WTC11 (cell line): ENCODE measurements at regions of chr19 and their contacts with region 1.

Region 1: DNA sequence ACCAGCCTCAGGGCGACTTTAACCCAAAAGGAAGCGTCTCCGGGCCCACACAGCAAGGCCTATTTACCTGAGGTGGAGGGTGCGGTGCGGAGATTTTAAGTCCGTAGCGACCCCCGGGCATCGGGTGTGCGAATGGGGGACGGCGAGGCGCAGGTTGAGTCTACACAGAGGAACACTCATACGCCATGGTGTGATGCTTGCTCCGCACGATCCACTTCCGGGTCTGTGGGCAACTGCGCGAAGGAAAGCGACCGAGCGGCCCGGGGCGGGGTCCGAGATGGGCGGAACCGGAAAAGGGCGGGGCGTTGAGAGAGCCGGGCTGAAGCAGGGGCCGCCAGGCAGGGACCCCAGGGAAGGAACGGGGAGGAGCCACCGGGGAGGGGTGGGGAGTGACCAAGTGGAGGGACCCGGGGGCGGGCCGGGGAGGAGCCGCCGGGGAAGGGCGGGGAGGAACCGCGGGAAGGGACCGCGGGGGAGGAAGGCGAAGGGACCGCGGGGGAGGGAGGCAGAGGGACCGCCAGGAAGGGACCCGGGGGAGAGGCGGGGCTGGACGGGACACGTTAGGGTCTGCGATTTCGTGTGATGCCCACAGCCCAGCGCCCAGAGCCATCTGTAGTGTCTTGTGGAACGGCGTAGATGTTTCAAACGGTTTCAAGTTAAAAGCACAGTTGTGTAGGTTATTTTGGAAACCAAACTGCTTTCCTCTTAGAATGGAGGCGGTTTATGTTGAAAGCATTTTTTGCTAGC is at the start of gene ZNF160:
- DNase-seq: peak; percentile 99
- ATAC-seq: peak; percentile 96
- H3K4me3 Mint-ChIP-seq: peak within 1 kb of the TSS; percentile 82
- H3K27ac Mint-ChIP-seq: peak within 1 kb of the TSS; percentile 76
- H3K4me1 Mint-ChIP-seq: peaks cover 13% of the 10 kb centered on the region
- H3K27me3 Mint-ChIP-seq: peaks cover 8% of the 10 kb centered on the region; the same call in 1 of the 2 replicates
- CTCF ChIP-seq: no peak
- total RNA-seq, gene ZNF160: 53.8 to 54.6 TPM (median 54.5 TPM) in 3 replicates

Region 2: DNA sequence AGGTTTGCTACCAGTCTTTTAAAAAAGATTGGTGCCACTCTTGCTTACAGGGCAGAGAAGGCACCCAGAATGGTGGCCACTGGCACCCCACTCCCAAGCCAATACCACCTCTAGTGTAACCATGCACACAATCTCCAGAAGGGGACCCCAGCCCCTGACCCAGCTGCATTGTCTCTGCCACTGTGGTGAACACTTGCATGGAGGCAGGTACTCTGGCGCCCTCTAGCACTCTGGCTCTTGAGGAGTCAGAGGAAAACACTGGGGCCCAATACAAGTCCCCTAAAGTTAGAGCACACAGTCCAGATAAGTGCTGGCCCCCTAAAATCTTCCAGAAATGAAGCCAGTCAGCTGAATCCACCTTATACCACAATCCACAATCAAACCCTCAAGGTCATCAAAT is 83.7 kb before region 1 on chr19:
- CTCF ChIA-PET with region 1: no interaction called
- POLR2A ChIA-PET with region 1: no interaction called
- DNase-seq: peak; percentile 89
- ATAC-seq: peak; percentile 100
- H3K4me3 Mint-ChIP-seq: no peak overlapping the region
- H3K27ac Mint-ChIP-seq: no peak overlapping the region
- H3K4me1 Mint-ChIP-seq: 0 out of 2 replicates have a peak, but pooled peaks cover 4% of the 10 kb centered on the region
- H3K27me3 Mint-ChIP-seq: peaks cover 17% of the 10 kb centered on the region
- CTCF ChIP-seq: peak; percentile 18; the same call in 1 of the 2 replicates

Region 3: DNA sequence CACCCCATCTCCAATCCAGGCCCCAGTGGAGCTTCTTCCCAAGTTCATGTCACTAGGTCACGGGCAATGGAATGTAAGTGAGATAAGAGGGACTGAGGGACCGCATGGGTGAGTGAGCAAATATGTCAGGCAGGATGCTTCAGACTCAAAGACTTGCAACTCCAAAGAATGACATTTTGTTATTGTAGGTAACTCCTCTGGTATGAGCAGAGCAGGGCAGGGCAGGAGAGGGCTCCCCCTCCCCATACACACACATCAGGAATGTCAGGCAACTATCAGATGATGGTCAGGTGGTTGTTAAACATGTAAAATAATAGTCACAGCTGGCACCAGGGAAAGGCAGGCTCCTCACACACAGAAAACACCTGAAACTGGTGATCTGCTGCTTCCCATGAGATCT is 48.3 kb before region 1 on chr19:
- CTCF ChIA-PET with region 1: no interaction called
- POLR2A ChIA-PET with region 1: no interaction called
- DNase-seq: no peak
- ATAC-seq: no peak
- H3K4me3 Mint-ChIP-seq: no peak overlapping the region
- H3K27ac Mint-ChIP-seq: no peak overlapping the region
- H3K4me1 Mint-ChIP-seq: peaks cover 13% of the 10 kb centered on the region
- H3K27me3 Mint-ChIP-seq: peaks cover 47% of the 10 kb centered on the region
- CTCF ChIP-seq: no peak

Region 4: DNA sequence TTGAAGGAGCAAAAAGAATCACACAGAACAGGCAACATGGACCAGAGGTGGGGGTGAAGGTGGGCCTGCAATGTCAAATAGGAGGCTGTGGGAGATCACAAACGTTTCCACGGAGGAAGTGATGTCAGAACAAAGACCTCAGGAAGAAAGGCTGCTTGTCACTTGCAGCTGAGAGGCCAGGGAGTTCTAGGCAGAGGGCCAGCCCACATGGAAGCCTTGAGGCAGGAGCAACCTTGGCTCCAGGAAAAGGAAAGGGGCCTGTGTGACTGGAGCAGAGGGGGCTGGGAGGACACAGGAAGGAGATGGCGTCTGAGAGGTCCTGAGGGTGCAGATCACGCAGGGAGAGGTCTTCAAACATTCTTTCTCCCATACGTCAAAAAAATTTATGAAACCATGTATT is 16.4 kb before region 1 on chr19:
- CTCF ChIA-PET with region 1: interaction called, 11 read pairs
- POLR2A ChIA-PET with region 1: no interaction called
- DNase-seq: no peak
- ATAC-seq: no peak
- H3K4me3 Mint-ChIP-seq: no peak overlapping the region
- H3K27ac Mint-ChIP-seq: no peak overlapping the region
- H3K4me1 Mint-ChIP-seq: peaks cover 5% of the 10 kb centered on the region
- H3K27me3 Mint-ChIP-seq: no peaks in the 10 kb centered on the region
- CTCF ChIP-seq: no peak